A673 (cell line): ENCODE measurements at regions of chr7 and their contacts with region 1.

Region 1: GRCh38 chr7:70040970-70041766 is 442.9 kb downstream of the AUTS2 start:
- DNase-seq: peak; percentile 68
- H3K4me3 ChIP-seq: no peak overlapping the region
- H3K27ac ChIP-seq: peak overlapping the region; percentile 55
- H3K4me1 ChIP-seq: peaks cover 44% of the 10 kb centered on the region
- H3K27me3 ChIP-seq: no peaks in the 10 kb centered on the region
- CTCF ChIP-seq: peak; percentile 70

Region 2: DNA sequence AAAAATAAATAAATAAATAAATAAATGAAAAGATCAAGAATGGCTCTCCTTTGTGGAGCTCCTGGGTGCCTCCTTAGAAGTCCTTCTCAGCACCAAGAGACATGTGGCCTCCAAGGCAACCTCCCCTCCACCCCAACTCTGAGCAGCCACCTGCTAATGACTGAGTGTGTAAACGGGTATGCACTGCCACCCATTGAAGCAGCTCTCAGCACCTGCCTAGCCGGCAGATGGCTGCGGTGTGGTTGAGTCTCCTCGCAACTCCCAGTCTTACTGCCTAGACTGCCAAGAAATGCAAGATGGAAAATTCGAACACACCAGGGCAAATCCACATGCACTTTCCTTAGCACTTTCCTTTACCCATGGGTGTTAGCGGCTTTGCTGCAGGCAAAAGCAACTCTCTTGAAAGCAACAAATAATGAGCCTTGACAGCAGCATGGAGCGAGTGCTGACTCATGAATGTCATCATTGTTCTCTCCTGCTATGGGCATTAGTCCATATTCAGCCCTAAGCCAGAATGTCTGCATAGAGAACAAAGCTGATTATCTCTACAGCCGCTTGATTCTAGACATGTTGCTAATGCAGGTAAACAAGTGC is 1356.8 kb before region 1 on chr7:
- CTCF ChIA-PET with region 1: interaction called, 11 read pairs
- POLR2A ChIA-PET with region 1: interaction called, 13 read pairs
- intact Hi-C with region 1: loop called (anchors 5 kb)
- DNase-seq: peak; percentile 68
- H3K4me3 ChIP-seq: no peak overlapping the region
- H3K27ac ChIP-seq: no peak overlapping the region
- H3K4me1 ChIP-seq: peaks cover 48% of the 10 kb centered on the region
- H3K27me3 ChIP-seq: no peaks in the 10 kb centered on the region
- CTCF ChIP-seq: no peak

Region 3: DNA sequence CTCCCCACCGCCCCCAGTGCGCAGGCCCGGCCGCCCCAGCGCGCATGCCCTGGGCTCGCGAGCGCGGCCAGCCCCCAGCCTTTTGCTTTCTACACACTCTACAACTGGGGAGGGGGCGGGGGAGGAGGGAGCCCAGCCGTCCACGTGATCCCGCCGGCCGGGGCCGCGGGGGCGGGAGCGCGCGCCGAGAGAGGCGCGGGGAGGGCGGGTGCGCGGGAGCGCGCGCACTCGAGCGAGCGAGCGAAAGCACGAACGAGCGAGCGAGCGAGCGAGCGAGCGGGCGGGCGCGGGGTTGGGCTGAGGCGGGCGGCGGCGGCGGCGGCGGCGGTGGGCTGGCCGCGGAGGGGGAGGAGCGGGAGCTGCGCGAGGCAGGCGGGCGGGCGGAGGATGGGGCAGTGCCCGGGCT is 443.1 kb before region 1 on chr7 and contains the start of gene AUTS2:
- CTCF ChIA-PET with region 1: no interaction called
- POLR2A ChIA-PET with region 1: no interaction called
- intact Hi-C with region 1: loop called (anchors 10 kb)
- DNase-seq: peak; percentile 97
- H3K4me3 ChIP-seq: peak within 1 kb of the TSS; percentile 81
- H3K27ac ChIP-seq: peak within 1 kb of the TSS; percentile 66
- H3K4me1 ChIP-seq: peaks cover 10% of the 10 kb centered on the region
- H3K27me3 ChIP-seq: no peaks in the 10 kb centered on the region
- CTCF ChIP-seq: no peak
- total RNA-seq, gene AUTS2: 42.1 and 44.3 TPM in 2 replicates

Region 4: DNA sequence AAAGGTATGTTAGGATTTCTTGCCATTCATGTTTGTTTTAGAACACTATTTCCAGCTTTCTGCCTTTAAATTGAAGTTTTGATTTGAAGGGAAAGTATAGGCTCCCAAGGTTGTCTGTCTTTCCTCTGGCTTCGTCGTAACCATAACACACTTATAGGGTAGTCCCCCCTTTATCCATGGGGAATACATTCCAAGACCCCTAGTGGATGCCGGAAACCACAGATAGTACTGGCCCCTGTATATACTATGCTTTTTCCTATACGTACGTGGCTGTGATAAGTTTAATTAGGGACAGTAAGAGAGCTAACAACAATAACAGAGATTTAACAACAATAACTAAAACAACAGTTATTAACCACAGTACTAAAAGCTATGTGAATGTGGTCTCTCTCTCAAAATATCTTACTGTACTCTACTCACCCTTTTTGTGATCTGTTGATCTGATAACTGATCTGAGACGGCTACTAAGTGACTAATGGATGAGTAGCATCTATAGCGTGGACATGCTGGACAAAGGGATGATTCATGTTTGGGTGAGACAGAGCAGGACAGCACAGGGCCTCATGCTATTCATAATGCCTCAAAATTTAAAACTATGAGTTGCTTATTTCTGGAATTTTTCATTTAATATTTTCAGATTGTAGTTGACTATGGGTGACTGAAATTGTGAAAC is 169.8 kb before region 1 on chr7:
- CTCF ChIA-PET with region 1: no interaction called
- POLR2A ChIA-PET with region 1: no interaction called
- intact Hi-C with region 1: no loop called
- DNase-seq: no peak
- H3K4me3 ChIP-seq: no peak overlapping the region
- H3K27ac ChIP-seq: no peak overlapping the region
- H3K4me1 ChIP-seq: no peaks in the 10 kb centered on the region
- H3K27me3 ChIP-seq: no peaks in the 10 kb centered on the region
- CTCF ChIP-seq: no peak

Region 5: GRCh38 chr7:70098133-70098561 is 57.0 kb after region 1 on chr7:
- CTCF ChIA-PET with region 1: no interaction called
- POLR2A ChIA-PET with region 1: no interaction called
- intact Hi-C with region 1: loop called (anchors 5 kb)
- DNase-seq: peak; percentile 95
- H3K4me3 ChIP-seq: no peak overlapping the region
- H3K27ac ChIP-seq: no peak overlapping the region
- H3K4me1 ChIP-seq: peaks cover 47% of the 10 kb centered on the region
- H3K27me3 ChIP-seq: peaks cover 56% of the 10 kb centered on the region
- CTCF ChIP-seq: no peak

Region 6: DNA sequence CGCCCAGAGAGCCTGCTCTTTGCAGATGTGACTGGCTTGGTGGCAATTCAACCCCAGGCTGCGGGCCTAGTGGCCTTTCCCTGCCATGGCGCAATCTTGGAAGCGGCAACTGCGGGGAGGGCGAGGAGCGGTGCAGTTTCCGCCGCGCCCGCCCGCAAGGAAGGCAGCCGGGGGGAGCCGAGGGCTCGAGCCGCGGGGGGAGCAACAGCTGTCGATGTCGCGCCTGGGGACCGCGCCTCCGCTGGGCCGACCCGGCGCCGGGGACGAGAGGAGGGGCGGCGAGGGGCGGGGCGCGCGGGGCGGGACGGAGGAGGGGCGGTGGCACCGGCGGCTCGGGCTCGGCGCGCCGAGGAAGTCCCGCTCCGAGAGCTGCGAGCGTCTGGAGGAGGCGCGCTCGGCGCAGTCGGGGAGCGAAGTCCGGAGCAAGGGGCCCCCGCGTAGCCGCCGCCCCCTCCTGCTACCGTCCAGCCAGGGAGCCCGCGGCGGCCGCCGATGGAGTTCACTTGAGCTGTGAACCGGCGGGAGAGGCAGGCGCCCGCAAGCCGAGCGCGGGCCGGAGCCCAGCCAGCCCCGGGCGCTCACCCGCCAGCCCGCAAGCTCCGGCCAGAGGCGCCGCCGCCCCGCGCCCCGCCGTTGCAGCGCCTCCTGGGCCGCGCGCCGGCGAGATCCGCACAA is 652.7 kb after region 1 on chr7:
- CTCF ChIA-PET with region 1: interaction called, 8 read pairs
- POLR2A ChIA-PET with region 1: no interaction called
- intact Hi-C with region 1: loop called (anchors 5 kb)
- DNase-seq: peak; percentile 73
- H3K4me3 ChIP-seq: peak overlapping the region; percentile 82
- H3K27ac ChIP-seq: no peak overlapping the region
- H3K4me1 ChIP-seq: peaks cover 22% of the 10 kb centered on the region
- H3K27me3 ChIP-seq: peaks cover 19% of the 10 kb centered on the region
- CTCF ChIP-seq: no peak